ENCODE measurements at regions of chr3 and their contacts with region 1.

Region 1: DNA sequence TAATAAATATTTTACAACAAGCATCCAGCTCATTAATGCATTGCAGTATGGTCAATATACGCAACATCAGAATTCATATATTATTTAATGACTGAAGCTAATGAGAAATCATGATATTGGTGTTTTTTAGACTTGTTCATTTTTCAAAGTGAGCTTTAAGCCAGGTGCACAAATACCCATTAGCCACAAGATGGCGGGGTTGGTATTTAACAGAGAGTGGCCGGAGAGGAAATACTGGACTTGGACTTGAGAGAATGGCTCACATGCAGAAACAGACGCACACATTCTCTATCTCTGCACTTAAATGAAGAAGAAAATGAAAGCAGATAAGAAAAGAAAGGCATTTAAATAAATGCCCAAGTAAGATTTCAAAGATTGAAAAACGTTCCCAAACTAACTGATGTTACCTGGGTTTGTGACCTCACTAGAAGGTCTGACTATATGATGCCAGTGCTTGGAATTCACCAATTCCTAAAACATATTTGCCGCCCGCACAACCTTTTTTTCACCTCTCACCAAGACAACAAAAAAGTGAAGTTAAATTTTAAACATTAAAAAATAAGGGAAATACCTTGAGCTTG is 21.2 kb upstream of the CRBN start:
- DNase-seq: peak; percentile 46
- H3K4me3 ChIP-seq: no peak overlapping the region
- H3K27ac ChIP-seq: no peak overlapping the region
- H3K4me1 ChIP-seq: no peaks in the 10 kb centered on the region
- H3K27me3 ChIP-seq: no peaks in the 10 kb centered on the region
- CTCF ChIP-seq: peak; percentile 83 to 88

Region 2: DNA sequence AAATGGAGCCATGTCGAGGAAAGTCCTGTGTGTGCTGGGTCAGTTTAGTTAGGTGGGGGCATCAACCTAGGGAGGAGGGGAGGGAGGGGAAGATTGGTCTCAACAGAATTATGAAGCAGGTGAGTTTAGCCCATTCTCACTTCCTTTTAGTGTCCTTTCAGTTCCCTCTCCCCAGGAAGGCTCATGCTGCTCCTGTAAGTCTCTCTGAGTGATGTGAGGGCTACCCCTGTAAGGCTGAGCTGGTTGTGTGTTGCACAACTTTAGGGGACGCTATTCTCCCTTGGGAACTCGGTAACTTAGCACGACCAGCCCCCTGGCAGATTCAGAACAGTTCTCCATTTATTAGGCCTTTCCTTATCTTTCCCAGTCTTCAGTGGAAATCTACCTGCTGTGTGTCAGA is 111.7 kb before region 1 on chr3:
- CTCF ChIA-PET with region 1: no interaction called
- dilution Hi-C with region 1: no loop called
- in situ Hi-C with region 1: no loop called
- intact Hi-C with region 1: no loop called
- DNase-seq: no peak
- H3K4me3 ChIP-seq: no peak overlapping the region
- H3K27ac ChIP-seq: no peak overlapping the region
- H3K4me1 ChIP-seq: no peaks in the 10 kb centered on the region
- H3K27me3 ChIP-seq: no peaks in the 10 kb centered on the region
- CTCF ChIP-seq: no peak

Region 3: GRCh38 chr3:3998140-3998922 is 797.6 kb after region 1 on chr3:
- CTCF ChIA-PET with region 1: interaction called, 19 read pairs
- dilution Hi-C with region 1: no loop called
- in situ Hi-C with region 1: no loop called
- intact Hi-C with region 1: loop called (anchors 1 kb)
- DNase-seq: peak; percentile 17
- H3K4me3 ChIP-seq: no peak overlapping the region
- H3K27ac ChIP-seq: no peak overlapping the region
- H3K4me1 ChIP-seq: no peaks in the 10 kb centered on the region
- H3K27me3 ChIP-seq: no peaks in the 10 kb centered on the region
- CTCF ChIP-seq: peak; percentile 33 to 62

Region 4: GRCh38 chr3:4271834-4272233 is 1071.1 kb after region 1 on chr3:
- CTCF ChIA-PET with region 1: interaction called, 11 read pairs
- dilution Hi-C with region 1: loop called (anchors 25 kb)
- in situ Hi-C with region 1: loop called in 1 of 2 experiments (anchors 25 kb)
- intact Hi-C with region 1: loop called (anchors 1 kb)
- DNase-seq: peak; percentile 3
- H3K4me3 ChIP-seq: no peak overlapping the region
- H3K27ac ChIP-seq: no peak overlapping the region
- H3K4me1 ChIP-seq: no peaks in the 10 kb centered on the region
- H3K27me3 ChIP-seq: no peaks in the 10 kb centered on the region
- CTCF ChIP-seq: peak; percentile 48 to 52

Region 5: DNA sequence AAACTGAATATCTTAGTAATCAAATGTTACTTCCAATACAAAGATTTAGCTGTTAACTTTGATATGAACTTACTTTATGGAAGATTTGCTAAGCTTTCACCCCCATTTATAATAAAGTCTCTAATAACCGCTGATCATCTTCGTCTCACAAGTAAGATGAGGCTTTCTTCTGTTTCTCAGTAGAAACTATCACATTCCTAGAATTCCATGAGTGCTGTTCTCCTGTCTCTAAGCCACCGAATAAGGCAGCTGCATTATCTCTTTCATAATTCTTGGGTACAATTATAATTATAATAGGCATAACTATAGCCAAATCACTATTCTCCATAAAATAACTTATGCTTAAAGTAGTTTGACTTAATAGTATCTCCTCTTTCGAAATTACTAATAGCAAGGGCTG is 1084.1 kb after region 1 on chr3:
- CTCF ChIA-PET with region 1: no interaction called
- dilution Hi-C with region 1: loop called (anchors 25 kb)
- in situ Hi-C with region 1: loop called (anchors 10 to 25 kb)
- intact Hi-C with region 1: loop called (anchors 1 kb)
- DNase-seq: no peak
- H3K4me3 ChIP-seq: no peak overlapping the region
- H3K27ac ChIP-seq: no peak overlapping the region
- H3K4me1 ChIP-seq: no peaks in the 10 kb centered on the region
- H3K27me3 ChIP-seq: no peaks in the 10 kb centered on the region
- CTCF ChIP-seq: no peak

Region 6: DNA sequence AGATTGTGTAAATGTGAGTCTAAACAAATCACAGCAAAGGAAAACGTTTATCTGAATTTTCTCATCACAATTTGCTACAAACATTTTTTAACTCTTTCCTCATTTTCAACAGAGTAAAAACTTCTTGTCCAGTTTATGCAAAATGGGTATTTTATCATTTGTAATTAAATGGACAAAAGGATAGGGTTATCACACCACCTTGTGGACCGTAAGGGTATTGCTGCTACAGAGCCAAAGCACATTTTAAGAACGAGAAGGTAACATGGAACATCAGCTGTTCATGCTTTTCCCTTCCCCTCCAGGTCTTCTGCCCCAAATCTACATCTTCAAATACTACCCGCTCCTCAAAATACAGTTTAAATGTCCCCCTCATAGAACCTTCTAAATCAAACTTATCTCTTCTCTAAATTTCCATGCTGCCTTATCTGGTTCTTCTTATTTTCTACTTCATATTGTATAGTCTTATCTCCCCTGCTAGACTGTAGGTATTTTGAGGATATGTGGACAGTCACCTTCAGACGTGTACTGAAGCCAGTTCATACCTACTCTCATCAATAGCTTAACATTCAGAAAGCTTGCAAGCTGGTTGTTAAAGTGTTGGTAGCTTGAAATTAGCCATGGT is 1089.7 kb after region 1 on chr3:
- CTCF ChIA-PET with region 1: no interaction called
- dilution Hi-C with region 1: loop called (anchors 25 kb)
- in situ Hi-C with region 1: loop called (anchors 10 to 25 kb)
- intact Hi-C with region 1: loop called (anchors 1 kb)
- DNase-seq: peak; percentile 25
- H3K4me3 ChIP-seq: no peak overlapping the region
- H3K27ac ChIP-seq: no peak overlapping the region
- H3K4me1 ChIP-seq: no peaks in the 10 kb centered on the region
- H3K27me3 ChIP-seq: no peaks in the 10 kb centered on the region
- CTCF ChIP-seq: peak; percentile 88 to 92